Testis (tissue), 5 donors: ENCODE measurements at regions of chr17 and their contacts with region 1.

Region 1: DNA sequence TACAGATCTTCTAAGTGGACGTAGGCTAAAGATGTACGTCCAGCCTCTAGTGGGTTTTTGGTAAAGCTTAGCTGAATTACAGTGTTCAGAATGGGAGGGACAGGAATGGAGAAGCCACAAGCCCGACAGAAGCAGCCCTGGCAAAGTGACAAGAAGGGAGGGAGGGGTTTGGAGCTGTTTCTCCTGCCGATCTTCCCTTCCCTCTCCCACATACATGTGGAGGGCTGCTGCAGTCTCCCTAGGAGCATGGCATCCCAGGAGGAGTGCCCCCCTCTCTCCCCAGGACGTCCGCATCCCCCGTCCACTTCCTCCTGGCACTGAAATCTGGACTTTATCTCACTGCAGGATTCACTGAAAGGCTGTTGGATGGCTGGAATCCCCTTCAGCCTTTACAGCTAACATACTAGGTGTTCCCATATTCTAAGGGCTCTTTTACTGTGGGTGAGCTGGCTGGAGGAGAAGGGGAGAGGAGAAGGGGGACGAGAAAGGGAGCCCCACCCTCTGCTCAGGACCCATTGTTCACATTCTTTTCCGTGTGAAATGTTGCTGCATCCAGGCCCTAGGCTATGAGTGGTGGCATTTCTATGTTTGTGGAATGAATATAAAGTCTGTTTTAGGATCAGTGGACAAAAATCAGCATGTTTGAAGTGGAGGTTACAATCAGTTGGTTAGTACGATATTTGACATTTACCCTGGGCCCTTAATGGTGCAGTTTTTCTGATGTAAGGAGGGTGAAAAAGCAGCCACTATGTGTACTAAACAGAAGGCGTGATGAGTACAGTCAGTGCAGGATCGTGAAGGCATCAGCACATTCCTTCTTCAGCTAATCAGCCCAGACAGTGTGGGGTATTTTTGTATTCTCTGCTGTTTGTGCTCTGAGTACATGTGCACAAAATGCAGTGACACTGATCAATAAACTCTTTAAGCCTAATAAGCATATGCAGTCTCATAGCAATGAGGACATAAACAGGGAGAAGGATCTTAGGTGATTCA is 94.6 kb downstream of the SPECC1 start:
- DNase-seq: peak; percentile 42
- H3K4me3 ChIP-seq: no peak overlapping the region
- H3K27ac ChIP-seq: peak overlapping the region in 1 of 2 donors; percentile 41
- H3K4me1 ChIP-seq: peaks cover 12% of the 10 kb centered on the region
- H3K27me3 ChIP-seq: no peaks in the 10 kb centered on the region
- CTCF ChIP-seq: no peak
- POLR2A ChIP-seq: no peak

Region 2: GRCh38 chr17:20009302-20010098 is 94.2 kb before region 1 on chr17 and contains the start of gene SPECC1:
- intact Hi-C with region 1: loop called (anchors 10 kb)
- DNase-seq: peak; percentile 85
- H3K4me3 ChIP-seq: peak within 1 kb of the TSS; percentile 60 to 81
- H3K27ac ChIP-seq: peak within 1 kb of the TSS; percentile 88 to 91
- H3K4me1 ChIP-seq: no peaks in the 10 kb centered on the region
- H3K27me3 ChIP-seq: no peaks in the 10 kb centered on the region
- CTCF ChIP-seq: peak; percentile 98 to 100 (median 99)
- POLR2A ChIP-seq: no peak
- total RNA-seq, gene SPECC1: 148 to 160 TPM